Activated CD8-positive, alpha-beta T cell treated with anti-CD3 and anti-CD28 coated beads for 36 hours (primary cell): ENCODE measurements at regions of chr12 and their contacts with region 1.

Region 1: DNA sequence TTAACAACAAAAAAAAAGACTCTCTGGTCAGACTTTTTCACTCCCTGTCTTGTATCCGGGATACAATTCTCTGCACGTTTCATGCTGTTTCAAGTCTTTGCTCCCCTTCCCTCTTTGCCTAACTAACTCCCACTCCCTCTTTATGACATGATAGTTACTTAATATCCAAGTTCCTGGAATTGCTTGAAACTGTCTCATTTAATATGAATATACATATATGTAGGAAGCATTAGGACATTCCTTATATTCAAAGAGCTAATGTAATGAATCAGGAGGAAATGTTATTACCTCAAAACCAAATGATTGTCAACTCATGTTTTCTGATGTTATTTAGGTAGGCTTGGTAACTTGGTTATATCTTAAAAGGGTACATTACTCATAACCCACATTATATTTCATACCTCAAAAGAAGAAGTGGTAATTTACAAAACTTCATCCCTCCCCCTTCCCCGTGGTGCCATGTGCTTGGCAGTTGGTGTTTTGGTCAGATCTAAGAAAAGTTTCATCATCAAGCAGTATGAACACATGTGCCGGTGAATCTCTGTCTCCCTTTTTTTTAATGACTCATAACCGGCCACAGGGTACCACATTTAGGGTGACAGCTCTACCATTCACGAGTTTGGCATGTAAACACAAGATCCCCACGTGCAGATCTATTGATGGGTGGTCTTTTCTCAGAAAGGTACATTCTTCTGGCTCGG is 56.5 kb downstream of the HCAR2 start:
- DNase-seq: peak; percentile 82
- ATAC-seq: peak; percentile 95
- H3K4me3 Mint-ChIP-seq: peak overlapping the region; percentile 60
- H3K27ac Mint-ChIP-seq: peak overlapping the region; percentile 85
- H3K4me1 Mint-ChIP-seq: peaks cover 17% of the 10 kb centered on the region
- H3K27me3 Mint-ChIP-seq: peaks cover 2% of the 10 kb centered on the region
- CTCF ChIP-seq: no peak

Region 2: DNA sequence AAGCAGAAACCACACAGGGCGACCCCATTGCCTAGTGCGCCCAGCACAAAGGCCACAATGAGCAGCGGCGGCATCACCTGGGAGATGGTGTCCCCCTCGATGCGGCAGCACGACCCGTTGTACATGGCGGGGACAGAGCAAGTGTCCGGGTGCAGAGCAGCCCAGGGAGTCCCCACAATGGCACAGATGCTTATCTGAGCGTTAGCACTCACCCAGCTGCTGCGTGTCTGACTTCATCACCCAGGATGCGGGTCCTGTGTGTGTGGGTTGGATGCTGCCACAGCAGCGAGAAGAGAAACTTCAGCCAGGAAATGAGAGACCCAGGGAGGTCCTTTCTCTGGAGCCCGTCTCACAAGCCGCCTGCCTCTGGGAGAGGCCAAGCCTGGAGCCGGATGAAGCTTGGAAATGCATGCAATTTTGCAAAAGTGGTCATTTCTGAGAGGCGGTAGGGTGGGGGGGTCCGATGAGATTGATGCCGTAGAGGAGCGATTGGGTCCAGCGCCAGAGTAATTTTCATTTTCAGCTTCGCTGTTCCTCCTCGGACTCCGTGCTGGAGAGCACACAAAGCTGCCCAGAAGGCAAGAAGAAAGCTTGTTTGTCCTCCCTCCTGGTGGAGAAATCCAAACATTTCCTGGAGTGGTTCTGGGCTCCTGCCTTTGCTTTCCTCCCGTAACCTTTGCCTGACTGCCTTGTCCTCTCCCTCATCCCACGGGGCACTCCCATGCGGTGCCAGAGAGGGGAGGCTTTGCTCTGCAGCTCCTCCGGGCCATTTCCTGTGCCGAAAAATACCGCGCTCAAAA is 83.7 kb after region 1 on chr12 and contains the start of gene HCAR1:
- CTCF ChIA-PET with region 1: no interaction called
- POLR2A ChIA-PET with region 1: no interaction called
- intact Hi-C with region 1: loop called (anchors 5 kb)
- DNase-seq: peak; percentile 85
- ATAC-seq: peak; percentile 80
- H3K4me3 Mint-ChIP-seq: peak within 1 kb of the TSS; percentile 1
- H3K27ac Mint-ChIP-seq: peak within 1 kb of the TSS; percentile 53
- H3K4me1 Mint-ChIP-seq: peaks cover 58% of the 10 kb centered on the region
- H3K27me3 Mint-ChIP-seq: peaks cover 3% of the 10 kb centered on the region
- CTCF ChIP-seq: no peak
- total RNA-seq, gene HCAR1: 0.18 to 0.25 TPM

Region 3: DNA sequence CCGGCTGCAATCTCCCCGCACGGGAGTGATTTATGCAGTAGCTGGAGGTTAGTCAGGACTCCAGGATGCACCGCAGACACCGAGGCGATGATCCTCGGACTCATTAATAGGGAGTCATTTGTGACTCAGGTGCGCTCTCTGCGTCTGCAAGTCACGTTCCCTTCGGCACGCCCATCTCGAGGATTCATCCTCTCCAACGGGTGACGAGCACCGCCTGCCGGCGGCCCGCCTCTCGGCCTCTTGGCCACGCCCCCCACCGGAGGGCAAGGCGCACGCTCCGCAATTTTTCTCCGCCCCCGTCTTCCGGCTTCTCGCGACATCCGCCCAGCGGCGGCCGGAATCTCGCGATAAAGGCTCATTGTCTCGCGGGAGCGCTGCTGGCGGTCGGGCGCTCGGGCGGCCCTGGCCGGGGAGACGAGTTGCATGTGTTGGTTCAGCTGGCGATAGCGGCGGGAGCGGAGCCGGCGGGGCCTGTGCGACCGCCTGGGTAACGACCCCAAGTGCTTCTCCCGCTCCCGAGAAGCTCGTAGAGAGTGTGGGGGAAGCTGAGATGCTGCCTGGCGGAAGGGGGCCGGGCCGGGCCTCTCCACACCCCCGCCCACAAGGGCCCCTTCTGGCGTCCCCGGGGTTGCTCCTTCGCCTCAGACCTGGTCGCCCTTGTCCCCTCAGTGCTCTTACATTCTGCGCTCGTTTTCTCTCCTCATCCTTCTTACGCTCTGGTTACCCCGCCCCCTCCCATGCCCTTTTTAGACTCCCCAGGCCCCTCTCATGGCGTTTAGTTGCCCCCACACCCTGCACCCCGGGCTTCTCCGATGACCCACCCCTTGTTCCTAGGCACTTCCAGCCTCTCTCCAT is 106.0 kb after region 1 on chr12 and contains the start of gene DENR:
- CTCF ChIA-PET with region 1: no interaction called
- POLR2A ChIA-PET with region 1: interaction called, 4 read pairs
- intact Hi-C with region 1: loop called (anchors 5 kb)
- DNase-seq: peak; percentile 99
- ATAC-seq: peak; percentile 96
- H3K4me3 Mint-ChIP-seq: peak within 1 kb of the TSS; percentile 94
- H3K27ac Mint-ChIP-seq: peak within 1 kb of the TSS; percentile 96
- H3K4me1 Mint-ChIP-seq: peaks cover 44% of the 10 kb centered on the region
- H3K27me3 Mint-ChIP-seq: no peaks in the 10 kb centered on the region
- CTCF ChIP-seq: peak; percentile 24
- total RNA-seq, gene DENR: 56.3 to 57.2 TPM